K562 (cell line): ENCODE measurements at regions of chr6 and their contacts with region 1.

Region 1: DNA sequence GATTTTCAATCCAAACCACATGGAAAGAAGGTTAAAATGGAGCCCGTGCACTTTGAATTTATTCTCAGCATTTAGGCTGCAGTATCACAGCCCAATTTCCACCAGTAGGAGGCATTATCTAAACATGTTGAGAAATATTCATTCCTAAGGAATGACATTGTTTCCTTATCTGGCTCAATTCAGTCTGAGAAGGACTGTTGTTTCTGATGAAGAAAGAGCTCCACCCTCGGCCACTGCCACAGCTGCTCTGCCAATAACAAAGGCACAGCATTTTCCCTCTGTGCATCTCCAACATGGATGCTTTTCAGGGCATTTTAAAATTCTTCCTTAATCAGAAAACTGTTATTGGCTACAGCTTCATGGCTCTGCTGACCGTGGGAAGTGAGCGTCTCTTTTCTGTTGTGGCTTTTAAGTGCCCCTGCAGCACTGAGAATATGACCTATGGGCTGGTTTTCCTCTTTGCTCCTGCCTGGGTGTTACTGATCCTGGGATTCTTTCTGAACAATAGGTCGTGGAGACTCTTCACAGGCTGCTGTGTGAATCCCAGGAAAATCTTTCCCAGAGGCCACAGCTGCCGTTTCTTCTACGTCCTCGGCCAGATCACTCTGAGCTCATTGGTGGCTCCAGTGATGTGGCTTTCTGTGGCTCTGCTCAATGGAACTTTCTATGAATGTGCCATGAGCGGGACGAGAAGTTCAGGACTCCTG is at the start of gene CALHM5:
- DNase-seq: peak; percentile 33 to 75 (median 42)
- ATAC-seq: peak; percentile 92
- H3K4me3 ChIP-seq: no peak within 1 kb of the TSS
- H3K27ac ChIP-seq: no peak within 1 kb of the TSS
- H3K4me1 ChIP-seq: peaks cover 3 to 6% of the 10 kb centered on the region in 2 experiments; a peak in 3 of 5 replicates
- H3K27me3 ChIP-seq: no peaks in the 10 kb centered on the region; a peak in 2 of 5 replicates
- CTCF ChIP-seq: peak; percentile 55 to 84 (median 72)
- EP300 ChIP-seq: peak; percentile 33; the same call in 1 of the 2 replicates
- POLR2A ChIP-seq: no peak
- RAD21 ChIP-seq: peak; percentile 74 to 85
- polyA plus RNA-seq, gene CALHM5: 0.04 TPM in 1 of 2 experiments, not detected in the other

Region 2: GRCh38 chr6:116444092-116444491 is 67.5 kb before region 1 on chr6:
- CTCF ChIA-PET with region 1: no interaction called
- POLR2A ChIA-PET with region 1: no interaction called
- in situ Hi-C with region 1: no loop called
- intact Hi-C with region 1: loop called (anchors 5 kb)
- DNase-seq: peak; percentile 24 to 45 (median 34)
- ATAC-seq: peak; percentile 86
- H3K4me3 ChIP-seq: no peak overlapping the region
- H3K27ac ChIP-seq: no peak overlapping the region
- H3K4me1 ChIP-seq: no peaks in the 10 kb centered on the region; a peak in 1 of 5 replicates
- H3K27me3 ChIP-seq: no peaks in the 10 kb centered on the region
- CTCF ChIP-seq: peak; percentile 43 to 65 (median 46); a peak in 5 of 6 replicates
- EP300 ChIP-seq: no peak
- POLR2A ChIP-seq: no peak
- RAD21 ChIP-seq: peak; percentile 50 to 71

Region 3: DNA sequence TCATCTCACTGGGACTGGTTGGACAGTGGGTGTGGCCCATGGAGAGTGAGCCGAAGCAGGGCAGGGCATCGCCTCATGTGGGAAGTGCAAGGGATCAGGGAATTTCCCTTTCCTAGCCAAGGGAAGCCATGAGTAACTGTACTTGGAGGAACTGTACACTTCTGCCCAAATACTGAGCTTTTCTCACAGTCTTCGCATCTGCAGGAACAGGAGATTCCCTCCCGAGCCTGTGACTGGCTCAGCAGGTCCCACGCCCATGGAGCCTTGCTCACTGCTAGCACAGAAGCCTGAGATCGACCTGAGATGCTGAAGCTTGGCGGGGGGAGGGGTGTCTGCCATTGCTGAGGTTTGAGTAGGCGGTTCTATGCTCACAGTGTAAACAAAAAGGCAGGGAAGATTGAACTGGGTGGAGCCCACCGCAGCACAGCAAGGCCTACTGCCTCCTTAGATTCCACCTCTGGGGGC is 10.6 kb before region 1 on chr6:
- CTCF ChIA-PET with region 1: no interaction called
- POLR2A ChIA-PET with region 1: interaction called, 10 read pairs
- in situ Hi-C with region 1: no loop called
- intact Hi-C with region 1: no loop called
- DNase-seq: peak; percentile 14 to 83 (median 22)
- ATAC-seq: peak; percentile 97
- H3K4me3 ChIP-seq: no peak overlapping the region
- H3K27ac ChIP-seq: no peak overlapping the region
- H3K4me1 ChIP-seq: peaks cover 5 to 10% of the 10 kb centered on the region in 2 experiments; a peak in 2 of 5 replicates
- H3K27me3 ChIP-seq: no peaks in the 10 kb centered on the region
- CTCF ChIP-seq: peak in 1 of 3 experiments; percentile 5; a peak in 2 of 6 replicates
- EP300 ChIP-seq: no peak; the same call in 1 of the 2 replicates
- POLR2A ChIP-seq: no peak
- RAD21 ChIP-seq: no peak

Region 4: DNA sequence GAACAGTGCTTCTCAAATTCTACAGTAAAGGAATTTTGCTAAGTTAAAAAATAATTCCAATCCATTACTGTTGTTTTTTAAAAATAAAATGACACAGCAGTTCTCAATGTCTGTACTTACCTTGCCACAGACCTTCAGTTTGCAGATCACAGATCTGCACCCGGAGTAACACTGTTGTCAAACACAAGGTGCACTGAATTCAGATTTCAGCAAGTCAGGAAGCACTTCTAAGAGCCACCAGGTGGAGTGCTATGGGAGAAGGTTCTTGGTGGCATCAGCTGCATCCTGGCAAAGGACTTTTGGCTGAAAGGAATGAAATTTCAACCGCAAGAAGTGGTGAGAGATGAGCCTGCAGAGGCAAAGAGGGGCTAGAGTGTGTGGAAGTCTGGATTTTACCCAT is 122.1 kb after region 1 on chr6:
- CTCF ChIA-PET with region 1: no interaction called
- POLR2A ChIA-PET with region 1: no interaction called
- in situ Hi-C with region 1: no loop called
- intact Hi-C with region 1: no loop called
- DNase-seq: peak in 2 of 4 experiments; percentile 16 to 25
- ATAC-seq: peak; percentile 61
- H3K4me3 ChIP-seq: no peak overlapping the region
- H3K27ac ChIP-seq: no peak overlapping the region
- H3K4me1 ChIP-seq: peaks cover 0 to 12% of the 10 kb centered on the region in 2 experiments; a peak in 2 of 5 replicates
- H3K27me3 ChIP-seq: no peaks in the 10 kb centered on the region
- CTCF ChIP-seq: peak; percentile 29 to 32 (median 32); a peak in 3 of 6 replicates
- EP300 ChIP-seq: no peak
- POLR2A ChIP-seq: no peak
- RAD21 ChIP-seq: no peak